ENCODE measurements at regions of chr15 and their contacts with region 1.

Region 1: DNA sequence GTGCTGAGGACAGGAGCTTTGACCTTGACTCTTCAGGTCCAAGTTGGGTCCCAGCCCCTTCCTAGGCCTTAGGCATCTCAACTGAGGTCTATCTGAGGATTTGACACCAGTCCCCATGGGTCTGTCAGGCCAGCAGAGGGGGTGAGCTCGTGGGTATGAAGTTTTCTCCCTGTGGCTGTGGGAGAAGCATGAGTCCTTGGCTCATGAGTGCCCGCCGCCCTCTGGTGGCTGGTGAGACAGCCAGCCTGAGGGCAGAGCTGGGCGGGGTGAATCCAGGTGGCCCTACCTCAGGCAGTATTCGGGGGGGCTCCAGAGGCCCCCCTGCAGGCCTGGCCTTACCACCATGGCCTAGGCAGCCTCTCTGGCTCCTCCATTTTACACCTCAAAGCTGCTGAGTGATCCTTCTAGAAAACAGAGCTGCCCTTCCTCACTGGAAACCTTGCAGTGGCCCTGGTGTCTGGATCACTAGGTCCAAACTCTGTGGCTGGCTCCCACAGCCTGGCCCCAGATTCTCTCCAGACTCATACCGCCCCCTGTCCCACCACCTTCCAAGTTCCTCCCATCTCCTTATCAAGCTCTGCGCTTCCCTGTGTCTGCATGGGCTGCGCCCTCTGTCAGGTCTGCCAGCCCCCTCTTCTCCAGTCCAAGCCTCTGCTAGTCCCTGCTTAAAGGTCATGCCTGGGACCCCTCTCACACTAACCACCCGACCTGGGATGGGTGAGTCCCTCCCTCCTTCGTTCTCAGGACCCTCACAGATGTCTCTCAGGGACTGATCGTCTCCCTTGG is 16.1 kb downstream of the SH2D7 start:
- DNase-seq: peak; percentile 77 to 93 (median 86)
- ATAC-seq: peak; percentile 92 to 96 (median 95)
- H3K4me3 ChIP-seq: no peak overlapping the region
- H3K27ac ChIP-seq: no peak overlapping the region
- H3K4me1 ChIP-seq: no peaks in the 10 kb centered on the region
- H3K27me3 ChIP-seq: no peaks in the 10 kb centered on the region
- CTCF ChIP-seq: peak; percentile 91 to 97 (median 92)

Region 2: GRCh38 chr15:77959432-77959879 is 149.0 kb before region 1 on chr15:
- intact Hi-C with region 1: loop called (anchors 2 to 10 kb)
- DNase-seq: peak; percentile 70 to 92 (median 84)
- ATAC-seq: peak; percentile 98 to 100 (median 100)
- H3K4me3 ChIP-seq: peak overlapping the region in 2 of 4 donors; percentile 3 to 6
- H3K27ac ChIP-seq: no peak overlapping the region
- H3K4me1 ChIP-seq: no peaks in the 10 kb centered on the region
- H3K27me3 ChIP-seq: no peaks in the 10 kb centered on the region
- CTCF ChIP-seq: peak; percentile 91 to 95 (median 94)

Region 3: GRCh38 chr15:77966540-77967290 is 141.8 kb before region 1 on chr15:
- intact Hi-C with region 1: loop called (anchors 2 to 10 kb)
- DNase-seq: no peak
- ATAC-seq: peak; percentile 72 to 93 (median 91)
- H3K4me3 ChIP-seq: no peak overlapping the region
- H3K27ac ChIP-seq: no peak overlapping the region
- H3K4me1 ChIP-seq: no peaks in the 10 kb centered on the region
- H3K27me3 ChIP-seq: no peaks in the 10 kb centered on the region
- CTCF ChIP-seq: peak; percentile 25 to 66 (median 62)

Region 4: GRCh38 chr15:77992356-77993222 is 115.9 kb before region 1 on chr15:
- intact Hi-C with region 1: loop called in 1 of 3 experiments (anchors 10 kb)
- DNase-seq: peak in 3 of 6 donors; percentile 53 to 78 (median 59)
- ATAC-seq: peak in 1 of 4 donors; percentile 13
- H3K4me3 ChIP-seq: no peak overlapping the region
- H3K27ac ChIP-seq: peak overlapping the region; percentile 41 to 91 (median 66)
- H3K4me1 ChIP-seq: peaks cover 11 to 30% (median 25%) of the 10 kb centered on the region in 3 donors
- H3K27me3 ChIP-seq: no peaks in the 10 kb centered on the region
- CTCF ChIP-seq: no peak

Region 5: GRCh38 chr15:77998592-77998991 is 109.9 kb before region 1 on chr15:
- intact Hi-C with region 1: loop called in 2 of 3 experiments (anchors 2 to 10 kb)
- DNase-seq: peak in 1 of 6 donors; percentile 23
- ATAC-seq: no peak
- H3K4me3 ChIP-seq: no peak overlapping the region
- H3K27ac ChIP-seq: no peak overlapping the region
- H3K4me1 ChIP-seq: peaks cover 16 to 20% (median 20%) of the 10 kb centered on the region in 3 donors
- H3K27me3 ChIP-seq: no peaks in the 10 kb centered on the region
- CTCF ChIP-seq: no peak

Region 6: GRCh38 chr15:78195735-78196201 is 87.3 kb after region 1 on chr15:
- intact Hi-C with region 1: loop called in 1 of 3 experiments (anchors 5 kb)
- DNase-seq: peak in 2 of 6 donors; percentile 15 to 48
- ATAC-seq: peak; percentile 82 to 98 (median 93)
- H3K4me3 ChIP-seq: no peak overlapping the region
- H3K27ac ChIP-seq: no peak overlapping the region
- H3K4me1 ChIP-seq: no peaks in the 10 kb centered on the region
- H3K27me3 ChIP-seq: no peaks in the 10 kb centered on the region
- CTCF ChIP-seq: peak; percentile 56 to 73 (median 66)

Region 7: DNA sequence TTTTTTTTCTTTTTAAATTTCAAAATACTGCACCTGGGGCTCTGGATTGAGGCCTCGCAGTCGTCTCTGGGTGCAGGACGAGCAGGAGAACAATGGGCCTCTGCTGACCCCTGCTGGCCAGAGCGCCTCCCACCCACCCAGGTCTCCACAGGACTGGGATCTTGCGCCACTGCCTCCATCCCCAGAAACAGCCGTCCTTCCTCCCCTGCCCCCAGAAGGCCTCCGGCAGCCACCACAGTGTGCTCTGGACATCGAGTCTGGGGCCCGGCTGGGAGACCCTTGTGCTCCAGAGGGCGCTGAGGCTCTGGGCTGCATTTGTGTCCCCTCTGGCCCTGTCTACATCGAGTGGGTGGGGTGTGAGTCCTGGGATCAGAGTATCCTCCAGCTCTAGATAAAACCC is 132.5 kb after region 1 on chr15:
- intact Hi-C with region 1: loop called in 2 of 3 experiments (anchors 2 to 5 kb)
- DNase-seq: peak; percentile 79 to 96 (median 90)
- ATAC-seq: peak; percentile 94 to 98 (median 98)
- H3K4me3 ChIP-seq: no peak overlapping the region
- H3K27ac ChIP-seq: no peak overlapping the region
- H3K4me1 ChIP-seq: no peaks in the 10 kb centered on the region
- H3K27me3 ChIP-seq: no peaks in the 10 kb centered on the region
- CTCF ChIP-seq: peak; percentile 73 to 90 (median 83)